ENCODE measurements at regions of chr4 and their contacts with region 1.

Region 1: DNA sequence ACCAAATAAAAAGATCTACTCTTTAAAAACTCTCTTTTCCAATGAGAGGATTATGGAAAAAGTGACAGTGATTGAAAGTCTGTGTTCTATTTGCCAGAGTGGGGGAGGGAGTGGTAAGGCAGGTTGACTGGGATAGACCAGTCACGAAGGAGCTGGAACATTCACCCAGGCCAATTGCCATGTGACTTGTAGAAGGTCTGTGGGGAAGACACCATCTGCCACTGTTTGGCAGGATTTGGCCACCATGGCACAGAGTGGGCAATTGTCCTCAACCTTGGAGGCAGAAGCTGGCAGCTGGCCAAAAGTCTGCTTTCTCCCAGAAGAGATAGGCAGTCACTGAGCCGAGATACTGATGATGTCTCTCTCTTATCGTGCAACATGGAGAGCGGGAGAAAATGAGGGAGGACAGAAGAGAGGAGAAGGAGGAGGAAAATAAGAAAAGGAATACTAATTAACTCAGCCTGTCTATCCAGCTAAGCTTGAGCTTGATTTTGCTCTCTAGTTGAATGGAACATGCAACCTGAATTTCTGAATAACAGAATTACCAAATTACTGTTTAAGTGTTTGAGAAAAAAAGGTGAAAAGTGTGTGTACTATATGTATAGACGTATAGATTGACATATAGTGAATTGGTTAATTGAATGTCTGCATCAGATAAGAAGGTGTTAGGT is 267.1 kb downstream of the ARHGAP24 start:
- DNase-seq: no peak
- ATAC-seq: no peak
- H3K4me3 ChIP-seq: no peak overlapping the region
- H3K27ac ChIP-seq: no peak overlapping the region
- H3K4me1 ChIP-seq: no peaks in the 10 kb centered on the region
- H3K27me3 ChIP-seq: no peaks in the 10 kb centered on the region
- CTCF ChIP-seq: no peak
- EP300 ChIP-seq: no peak
- POLR2A ChIP-seq: no peak
- RAD21 ChIP-seq: no peak

Region 2: DNA sequence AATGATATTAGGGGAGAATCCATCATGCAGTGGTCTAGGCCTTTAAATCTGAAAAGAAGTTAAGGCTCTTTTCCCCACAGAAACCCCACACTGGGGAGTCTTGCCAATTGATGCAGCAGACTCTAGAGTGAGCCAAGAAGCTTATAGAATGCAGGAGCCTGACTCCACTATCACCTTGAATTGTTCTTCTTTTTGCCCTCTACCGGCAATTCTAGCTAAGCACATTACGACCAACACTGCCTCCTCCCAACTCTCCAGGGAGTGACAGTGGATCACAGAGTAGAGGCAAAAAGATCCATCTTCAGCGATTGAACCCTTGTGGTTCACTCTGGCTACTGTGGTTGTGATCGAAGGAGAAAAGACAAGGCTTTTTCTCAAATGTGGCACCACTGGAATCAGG is 1574.5 kb before region 1 on chr4:
- CTCF ChIA-PET with region 1: no interaction called
- POLR2A ChIA-PET with region 1: no interaction called
- in situ Hi-C with region 1: no loop called
- intact Hi-C with region 1: no loop called
- DNase-seq: peak; percentile 3
- ATAC-seq: peak; percentile 89
- H3K4me3 ChIP-seq: no peak overlapping the region
- H3K27ac ChIP-seq: no peak overlapping the region
- H3K4me1 ChIP-seq: no peaks in the 10 kb centered on the region
- H3K27me3 ChIP-seq: no peaks in the 10 kb centered on the region
- CTCF ChIP-seq: peak; percentile 37; the same call in 1 of the 2 replicates
- EP300 ChIP-seq: no peak
- POLR2A ChIP-seq: no peak
- RAD21 ChIP-seq: no peak

Region 3: DNA sequence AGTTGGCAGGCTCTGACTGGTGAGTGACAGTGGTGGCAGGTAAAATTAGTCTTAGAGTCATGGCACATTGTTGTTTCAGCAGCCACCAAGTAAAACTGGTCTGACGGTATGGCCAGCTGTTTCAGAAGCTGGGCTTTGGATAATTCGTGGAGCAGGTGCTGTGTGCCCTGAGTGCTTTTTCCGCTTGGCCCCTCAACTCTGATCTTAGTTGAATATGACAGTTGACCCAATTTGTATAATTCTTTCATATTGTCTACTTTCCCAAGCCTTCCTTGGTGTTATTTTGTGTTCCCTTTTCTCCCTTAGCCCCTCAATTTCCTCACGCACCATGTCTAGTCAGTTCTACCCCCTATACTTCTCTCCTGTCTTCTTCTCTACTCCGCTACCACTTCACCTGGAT is 1127.2 kb before region 1 on chr4:
- CTCF ChIA-PET with region 1: no interaction called
- POLR2A ChIA-PET with region 1: no interaction called
- in situ Hi-C with region 1: no loop called
- intact Hi-C with region 1: loop called (anchors 5 kb)
- DNase-seq: no peak
- ATAC-seq: no peak
- H3K4me3 ChIP-seq: no peak overlapping the region
- H3K27ac ChIP-seq: no peak overlapping the region
- H3K4me1 ChIP-seq: no peaks in the 10 kb centered on the region
- H3K27me3 ChIP-seq: no peaks in the 10 kb centered on the region
- CTCF ChIP-seq: no peak
- EP300 ChIP-seq: no peak
- POLR2A ChIP-seq: no peak
- RAD21 ChIP-seq: no peak

Region 4: GRCh38 chr4:85701861-85702321 is 40.2 kb before region 1 on chr4:
- CTCF ChIA-PET with region 1: no interaction called
- POLR2A ChIA-PET with region 1: no interaction called
- in situ Hi-C with region 1: no loop called
- intact Hi-C with region 1: no loop called
- DNase-seq: no peak
- ATAC-seq: no peak
- H3K4me3 ChIP-seq: no peak overlapping the region
- H3K27ac ChIP-seq: no peak overlapping the region
- H3K4me1 ChIP-seq: no peaks in the 10 kb centered on the region
- H3K27me3 ChIP-seq: no peaks in the 10 kb centered on the region
- CTCF ChIP-seq: no peak
- EP300 ChIP-seq: no peak
- POLR2A ChIP-seq: no peak
- RAD21 ChIP-seq: no peak